ENCODE measurements at regions of chr10 and their contacts with region 1.

Region 1: DNA sequence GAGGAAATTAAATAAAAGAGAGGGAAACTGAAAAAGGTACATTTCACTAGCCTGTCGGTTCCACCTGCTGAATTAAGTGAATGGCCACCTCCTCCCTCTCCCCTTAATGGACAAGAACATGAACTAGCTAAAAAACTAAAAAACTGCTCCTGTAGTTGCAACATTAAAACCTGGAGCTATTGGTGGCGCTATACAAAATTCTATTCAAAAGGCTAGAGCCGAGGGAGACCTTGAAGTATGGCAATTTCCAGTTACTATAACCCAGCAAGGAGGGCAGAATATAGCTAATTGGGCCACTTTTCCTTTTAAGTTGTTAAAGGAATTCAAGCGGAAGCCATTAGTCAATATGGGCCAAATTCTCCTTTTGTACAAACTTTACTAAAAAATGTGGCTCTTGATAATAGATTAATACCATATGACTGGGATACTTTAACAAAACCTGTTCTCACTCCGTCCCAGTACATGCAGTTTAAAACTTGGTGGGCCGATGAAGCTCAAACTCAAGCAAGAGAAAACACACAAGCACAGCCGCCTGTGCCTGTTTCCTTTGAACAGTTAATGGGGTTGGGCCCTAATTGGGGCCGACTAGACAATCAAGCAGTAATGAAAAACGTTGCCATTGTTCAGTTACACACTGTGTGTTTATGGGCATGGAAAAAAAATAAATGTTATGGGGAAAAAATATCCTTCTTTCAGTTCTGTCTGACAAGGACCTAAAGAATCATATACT is 6.5 kb upstream of the CHST3 start:
- H3K4me3 Mint-ChIP-seq: no peak overlapping the region
- H3K27ac Mint-ChIP-seq: no peak overlapping the region
- H3K4me1 Mint-ChIP-seq: no peaks in the 10 kb centered on the region
- H3K27me3 Mint-ChIP-seq: peaks cover 29% of the 10 kb centered on the region

Region 2: GRCh38 chr10:71205468-71205867 is 752.2 kb before region 1 on chr10:
- intact Hi-C with region 1: no loop called
- H3K4me3 Mint-ChIP-seq: no peak overlapping the region
- H3K27ac Mint-ChIP-seq: no peak overlapping the region
- H3K4me1 Mint-ChIP-seq: peaks cover 5% of the 10 kb centered on the region
- H3K27me3 Mint-ChIP-seq: peaks cover 43% of the 10 kb centered on the region

Region 3: DNA sequence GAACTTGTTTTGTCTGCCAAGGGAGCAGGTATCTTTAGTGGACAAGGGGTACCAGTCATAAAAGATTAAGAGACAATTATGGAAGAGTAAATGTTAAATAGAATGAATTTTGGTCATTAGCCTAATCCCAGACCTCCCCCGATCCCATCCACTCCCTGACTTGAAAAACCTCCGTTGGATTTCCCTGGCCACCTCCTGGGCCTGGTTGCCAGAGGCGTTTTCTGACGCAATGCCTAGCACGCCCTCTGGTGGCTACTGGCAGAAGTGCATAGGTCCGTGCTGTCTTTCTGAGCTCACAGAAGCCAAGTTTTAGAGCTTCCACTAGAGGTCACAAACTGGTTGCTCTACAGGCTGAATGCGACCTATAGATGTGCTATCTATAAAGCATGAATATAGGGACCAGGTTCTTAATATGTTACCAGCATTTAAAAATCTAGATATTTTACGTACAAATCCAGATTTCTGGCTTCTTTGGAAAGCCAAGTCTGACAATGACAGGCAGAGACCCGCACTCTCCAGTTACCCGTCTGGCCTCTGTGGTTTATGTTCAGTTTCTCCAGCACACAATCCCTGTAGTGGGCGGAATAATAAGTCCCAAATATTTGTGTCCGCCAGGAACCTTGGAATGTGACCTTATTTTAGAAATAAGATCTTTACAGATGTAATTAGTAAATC is 90.9 kb after region 1 on chr10:
- intact Hi-C with region 1: loop called (anchors 2 kb)
- H3K4me3 Mint-ChIP-seq: no peak overlapping the region
- H3K27ac Mint-ChIP-seq: no peak overlapping the region
- H3K4me1 Mint-ChIP-seq: no peaks in the 10 kb centered on the region
- H3K27me3 Mint-ChIP-seq: peaks cover 1% of the 10 kb centered on the region

Measured in dendritic cell treated with granulocyte-macrophage colony-stimulating factor and Interleukin-4, amounts not matched to agents 40 ng/mL and 50 ng/mL, for 4 days (primary cell).